Pancreas (tissue), 10 donors: ENCODE measurements at regions of chr16 and their contacts with region 1.

Region 1: DNA sequence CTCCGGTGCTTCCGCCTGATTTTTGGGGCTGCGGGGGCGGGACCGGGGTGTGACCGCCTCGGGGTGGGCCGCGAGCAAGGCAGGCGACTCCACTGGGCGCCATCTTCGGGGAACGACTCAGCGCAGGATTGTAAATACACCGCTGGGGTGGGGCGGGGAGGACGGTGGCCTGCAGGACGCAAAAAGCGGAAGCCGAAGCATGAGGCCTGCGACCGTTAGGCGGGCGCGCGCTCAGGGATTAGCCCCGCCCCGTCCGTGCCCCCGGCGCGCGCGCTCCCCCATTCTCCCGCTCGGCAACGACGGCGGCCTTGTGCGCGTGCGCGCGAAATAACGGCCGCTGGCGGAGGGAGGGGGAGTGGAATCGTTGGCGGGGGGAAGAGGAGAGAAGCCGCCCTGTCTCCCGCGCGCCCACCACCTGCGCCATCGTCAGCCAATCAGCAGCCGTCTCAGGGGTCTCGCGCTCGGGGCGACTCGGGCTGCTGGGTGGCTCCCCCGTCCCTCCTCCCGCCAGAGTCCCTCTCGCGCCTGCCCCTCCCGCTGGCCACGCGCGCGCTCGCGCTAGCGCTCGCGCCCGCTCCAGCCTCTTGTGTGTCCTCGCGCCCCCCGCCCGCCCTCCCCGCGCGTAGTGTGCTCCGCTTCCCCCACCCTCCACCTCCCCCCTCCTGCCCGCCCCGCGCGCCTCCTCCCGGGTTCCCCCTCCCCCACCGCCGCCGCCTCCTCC is 791 bp upstream of the MAZ start:
- DNase-seq: peak; percentile 97 to 99 (median 98)
- ATAC-seq: peak; percentile 86 to 92 (median 90)
- H3K4me3 ChIP-seq: peak overlapping the region; percentile 60 to 84 (median 78)
- H3K27ac ChIP-seq: peak overlapping the region; percentile 93 to 97 (median 95)
- H3K4me1 ChIP-seq: peaks cover 0 to 11% (median 0%) of the 10 kb centered on the region in 3 donors
- H3K27me3 ChIP-seq: no peaks in the 10 kb centered on the region
- CTCF ChIP-seq: no peak

Region 2: GRCh38 chr16:29821643-29822115 is 16.1 kb after region 1 on chr16:
- intact Hi-C with region 1: loop called in 1 of 3 experiments (anchors 2 kb)
- DNase-seq: peak in 2 of 6 donors; percentile 41 to 43
- ATAC-seq: peak in 3 of 4 donors; percentile 2 to 14 (median 3)
- H3K4me3 ChIP-seq: peak overlapping the region; percentile 48 to 77 (median 54)
- H3K27ac ChIP-seq: peak overlapping the region; percentile 63 to 93 (median 87)
- H3K4me1 ChIP-seq: peaks cover 50 to 76% (median 63%) of the 10 kb centered on the region in 3 donors
- H3K27me3 ChIP-seq: no peaks in the 10 kb centered on the region
- CTCF ChIP-seq: no peak

Region 3: GRCh38 chr16:31179747-31180459 is 1374.4 kb after region 1 on chr16 and contains the start of gene FUS:
- intact Hi-C with region 1: no loop called
- DNase-seq: peak; percentile 85 to 99 (median 94)
- ATAC-seq: peak; percentile 87 to 93 (median 90)
- H3K4me3 ChIP-seq: peak within 1 kb of the TSS; percentile 57 to 92 (median 72)
- H3K27ac ChIP-seq: peak within 1 kb of the TSS; percentile 89 to 98 (median 92)
- H3K4me1 ChIP-seq: peaks cover 13 to 16% (median 14%) of the 10 kb centered on the region in 3 donors
- H3K27me3 ChIP-seq: no peaks in the 10 kb centered on the region
- CTCF ChIP-seq: no peak
- total RNA-seq, gene FUS: 69.4 to 134 (median 89.7) TPM